ENCODE measurements at regions of chr16 and their contacts with region 1.

Region 1: DNA sequence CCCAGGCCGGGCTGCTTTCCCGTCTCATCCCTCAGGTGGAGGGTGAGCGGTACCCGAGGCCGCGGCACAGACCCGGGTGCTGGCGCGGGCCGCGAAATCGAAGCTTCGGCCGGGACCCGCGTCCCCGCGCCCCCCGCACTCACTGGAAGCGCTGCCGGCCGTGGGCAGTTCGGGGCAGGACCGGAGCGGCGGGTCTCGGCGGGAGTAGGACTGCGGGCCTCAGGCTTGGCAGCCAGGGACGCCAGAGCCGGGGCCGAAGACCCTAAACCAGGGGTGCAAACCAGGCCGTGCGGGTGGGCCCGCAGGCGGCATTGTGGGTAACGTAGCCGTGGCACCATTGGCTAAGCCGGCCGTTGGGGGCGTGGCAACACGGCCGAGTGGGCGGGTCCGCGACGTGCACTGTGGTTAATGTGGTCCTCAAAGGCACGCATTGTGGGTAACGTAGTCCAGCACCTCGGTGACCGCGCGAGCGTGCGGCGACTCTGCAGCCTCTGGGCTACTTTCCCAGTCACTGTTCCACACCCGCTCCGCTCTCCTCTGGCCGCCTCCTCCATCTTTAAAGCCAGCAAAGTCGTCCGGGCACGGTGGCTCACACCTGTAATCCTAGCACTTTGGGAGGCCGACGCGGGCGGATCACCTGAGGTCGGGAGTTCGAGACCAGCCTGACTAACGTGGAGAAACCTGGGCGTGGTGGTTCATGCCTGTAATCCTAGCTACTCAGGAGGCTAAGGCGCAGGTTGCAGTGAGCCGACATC is at the start of gene ZNF500:
- DNase-seq: peak; percentile 88 to 97 (median 94)
- ATAC-seq: peak; percentile 86 to 94
- H3K4me3 Mint-ChIP-seq: peak within 1 kb of the TSS; percentile 88 to 95 (median 92)
- H3K27ac Mint-ChIP-seq: peak within 1 kb of the TSS; percentile 86 to 96 (median 94)
- H3K4me1 Mint-ChIP-seq: peaks cover 16 to 48% (median 34%) of the 10 kb centered on the region in 4 donors
- H3K27me3 Mint-ChIP-seq: no peaks in the 10 kb centered on the region
- polyA plus RNA-seq, gene ZNF500: 14.3 to 17.3 (median 16.8) TPM

Region 2: GRCh38 chr16:4802659-4803287 is 35.7 kb after region 1 on chr16:
- POLR2A ChIA-PET with region 1: interaction called, 10 read pairs
- DNase-seq: peak; percentile 76 to 99 (median 89)
- ATAC-seq: peak; percentile 83 to 87
- H3K4me3 Mint-ChIP-seq: peak overlapping the region; percentile 80 to 91 (median 86)
- H3K27ac Mint-ChIP-seq: peak overlapping the region in 8 of 10 donors; percentile 58 to 95 (median 86)
- H3K4me1 Mint-ChIP-seq: peaks cover 7 to 22% (median 13%) of the 10 kb centered on the region in 4 donors
- H3K27me3 Mint-ChIP-seq: no peaks in the 10 kb centered on the region

Measured in naive thymus-derived CD8-positive, alpha-beta T cell (primary cell).